Activated naive CD4-positive, alpha-beta T cell treated with anti-CD3 and anti-CD28 coated beads for 36 hours (primary cell): ENCODE measurements at regions of chr20 and their contacts with region 1.

Region 1: DNA sequence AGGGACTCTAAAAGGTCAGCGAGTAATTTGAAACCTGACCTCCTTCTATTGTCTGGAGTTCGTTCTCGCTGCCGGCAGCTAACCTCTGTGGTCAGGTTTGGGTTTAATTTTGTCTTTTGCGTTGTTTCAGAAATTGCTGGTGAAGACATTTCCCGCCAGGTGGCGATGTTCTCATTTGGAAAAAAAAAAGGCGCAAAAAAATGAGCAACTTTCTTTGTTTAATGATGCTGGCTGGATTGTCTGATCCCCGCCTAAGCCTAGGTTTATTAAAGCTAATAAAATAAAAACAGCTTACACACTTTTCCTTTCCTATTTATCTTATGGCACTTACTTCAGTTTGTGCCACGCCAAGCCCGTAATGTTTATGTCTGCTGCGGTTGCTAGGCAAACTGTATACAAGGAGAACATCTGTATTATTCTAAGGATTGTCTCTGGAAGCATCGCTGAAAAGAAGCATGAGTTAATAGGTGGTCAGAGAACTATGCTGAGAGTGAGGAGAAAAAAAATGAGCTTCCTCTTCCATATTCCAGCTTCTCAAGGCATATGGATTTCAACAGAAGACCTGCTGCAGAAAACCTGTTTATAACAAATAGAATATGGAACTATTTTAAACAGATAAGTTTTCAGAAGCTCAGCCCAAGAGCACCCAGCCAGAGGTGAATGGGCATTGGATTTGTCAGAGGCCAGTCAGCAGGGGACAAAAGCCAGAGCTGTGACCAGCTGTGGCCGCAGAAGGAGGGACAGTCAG is 205.7 kb downstream of the DOK5 start:
- DNase-seq: peak; percentile 31
- H3K4me3 Mint-ChIP-seq: no peak overlapping the region
- H3K27ac Mint-ChIP-seq: no peak overlapping the region
- H3K4me1 Mint-ChIP-seq: no peaks in the 10 kb centered on the region
- H3K27me3 Mint-ChIP-seq: peaks cover 33% of the 10 kb centered on the region

Region 2: DNA sequence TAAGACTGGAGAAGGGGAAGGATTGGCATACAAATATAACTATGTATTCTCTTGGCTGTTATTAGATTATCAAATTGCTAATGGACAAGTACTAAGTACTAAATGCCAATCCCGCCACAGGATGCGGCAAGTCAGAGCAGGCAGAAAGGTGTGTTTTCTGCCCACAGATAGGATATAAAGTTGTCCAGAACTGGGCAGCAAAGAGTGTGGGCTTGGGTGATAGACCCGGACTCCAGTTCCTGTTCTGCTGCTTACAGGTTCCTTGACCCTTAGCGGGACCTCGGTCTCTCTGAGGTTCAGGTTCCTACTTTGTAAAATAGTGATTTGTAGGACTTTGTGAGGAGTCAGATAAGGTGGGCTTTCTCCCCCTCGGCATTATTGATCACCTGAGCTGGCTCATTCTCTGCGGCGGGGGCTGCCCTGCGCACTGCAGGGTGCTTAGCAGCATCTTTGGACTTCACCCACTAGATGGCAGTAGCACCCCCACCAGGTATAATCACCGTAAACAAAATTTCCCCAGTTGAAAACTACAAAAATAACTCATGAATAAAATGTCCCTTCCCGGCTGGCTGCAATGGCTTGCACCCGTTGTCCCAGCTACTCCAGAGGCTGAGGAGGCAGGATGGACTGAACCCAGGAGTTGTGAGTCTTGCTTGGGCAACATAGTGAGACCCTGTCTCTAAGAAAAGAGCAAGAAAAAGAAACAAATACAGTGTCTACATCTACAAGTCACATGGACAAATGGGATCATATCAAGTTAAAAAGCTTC is 12.6 kb before region 1 on chr20:
- CTCF ChIA-PET with region 1: interaction called, 12 read pairs
- intact Hi-C with region 1: no loop called
- DNase-seq: peak; percentile 51
- H3K4me3 Mint-ChIP-seq: no peak overlapping the region
- H3K27ac Mint-ChIP-seq: no peak overlapping the region
- H3K4me1 Mint-ChIP-seq: peaks cover 3% of the 10 kb centered on the region
- H3K27me3 Mint-ChIP-seq: peaks cover 23% of the 10 kb centered on the region

Region 3: DNA sequence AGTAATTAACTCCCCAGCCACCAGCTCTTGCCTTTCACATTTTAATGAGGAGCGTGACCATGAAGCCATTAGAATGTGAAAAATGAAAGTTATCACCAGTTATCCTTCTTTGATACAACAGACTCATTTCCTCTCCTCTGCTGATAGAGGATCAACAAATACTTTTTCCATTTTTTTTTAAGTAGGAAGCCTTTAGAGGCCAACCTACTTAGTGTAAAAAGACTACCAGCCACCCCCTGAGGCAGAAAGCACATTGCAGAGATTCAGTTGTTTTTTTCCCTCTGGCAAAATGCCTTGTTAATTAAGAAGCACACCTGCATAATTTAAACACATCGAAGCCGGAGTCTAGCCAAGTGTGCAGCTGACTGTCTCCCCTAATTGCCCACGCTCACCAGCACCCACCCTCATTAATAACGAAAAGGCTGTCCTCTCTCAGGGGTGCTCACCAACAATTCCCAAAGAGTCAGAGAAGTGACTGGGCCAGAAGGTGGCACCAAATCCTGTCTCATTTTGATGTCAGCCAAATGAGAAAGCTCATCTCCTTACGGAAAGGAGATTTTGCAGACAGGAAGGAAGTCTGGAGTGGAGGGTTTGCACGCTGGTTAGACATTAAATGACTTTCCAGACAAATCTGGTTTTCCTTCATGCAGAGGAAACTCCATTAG is 1506.6 kb after region 1 on chr20:
- CTCF ChIA-PET with region 1: no interaction called
- intact Hi-C with region 1: loop called (anchors 10 kb)
- DNase-seq: no peak
- H3K4me3 Mint-ChIP-seq: no peak overlapping the region
- H3K27ac Mint-ChIP-seq: no peak overlapping the region
- H3K4me1 Mint-ChIP-seq: no peaks in the 10 kb centered on the region
- H3K27me3 Mint-ChIP-seq: no peaks in the 10 kb centered on the region

Region 4: GRCh38 chr20:56247948-56248782 is 1567.1 kb after region 1 on chr20 and contains the start of gene MC3R:
- CTCF ChIA-PET with region 1: no interaction called
- intact Hi-C with region 1: loop called (anchors 2 kb)
- DNase-seq: peak; percentile 59
- H3K4me3 Mint-ChIP-seq: no peak within 1 kb of the TSS
- H3K27ac Mint-ChIP-seq: no peak within 1 kb of the TSS
- H3K4me1 Mint-ChIP-seq: no peaks in the 10 kb centered on the region
- H3K27me3 Mint-ChIP-seq: peaks cover 45% of the 10 kb centered on the region
- total RNA-seq, gene MC3R: not detected

Region 5: DNA sequence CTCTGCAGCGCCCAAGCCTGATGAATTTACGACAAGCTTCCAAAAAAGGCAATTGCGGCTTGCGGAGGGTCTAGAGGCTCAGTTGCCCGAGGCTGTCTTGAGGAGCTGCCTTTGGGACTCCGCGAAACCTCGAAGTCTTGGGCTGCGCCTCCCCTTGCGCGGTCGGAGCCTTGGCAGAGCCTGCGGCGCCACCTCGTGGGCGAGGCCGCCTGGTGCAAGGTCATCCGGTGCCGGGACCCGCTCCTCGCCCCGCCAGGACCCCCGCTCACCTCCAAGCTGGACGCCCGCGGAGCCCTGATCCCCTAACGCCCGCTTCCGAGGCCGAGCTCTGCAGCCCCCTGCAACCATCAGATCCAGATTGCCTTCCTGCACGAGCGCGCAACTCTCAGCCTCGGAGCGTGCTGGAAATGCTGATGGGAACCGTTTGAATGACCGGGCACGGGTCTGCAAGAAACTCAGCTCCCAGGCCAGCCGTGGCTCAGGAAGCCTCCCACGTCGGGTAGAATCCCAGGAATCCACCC is 1662.9 kb after region 1 on chr20:
- CTCF ChIA-PET with region 1: interaction called, 4 read pairs
- intact Hi-C with region 1: loop called (anchors 2 kb)
- DNase-seq: peak; percentile 56
- H3K4me3 Mint-ChIP-seq: no peak overlapping the region
- H3K27ac Mint-ChIP-seq: no peak overlapping the region
- H3K4me1 Mint-ChIP-seq: peaks cover 10% of the 10 kb centered on the region
- H3K27me3 Mint-ChIP-seq: peaks cover 48% of the 10 kb centered on the region